ENCODE measurements at regions of chr3 and their contacts with region 1.

Region 1: GRCh38 chr3:134473868-134474546 is 11.8 kb downstream of the ANAPC13 start:
- DNase-seq: peak; percentile 66 to 92 (median 78)
- H3K4me3 ChIP-seq: no peak overlapping the region
- H3K27ac ChIP-seq: no peak overlapping the region
- H3K4me1 ChIP-seq: no peaks in the 10 kb centered on the region
- H3K27me3 ChIP-seq: no peaks in the 10 kb centered on the region
- CTCF ChIP-seq: peak; percentile 69 to 89 (median 82)
- POLR2A ChIP-seq: no peak

Region 2: DNA sequence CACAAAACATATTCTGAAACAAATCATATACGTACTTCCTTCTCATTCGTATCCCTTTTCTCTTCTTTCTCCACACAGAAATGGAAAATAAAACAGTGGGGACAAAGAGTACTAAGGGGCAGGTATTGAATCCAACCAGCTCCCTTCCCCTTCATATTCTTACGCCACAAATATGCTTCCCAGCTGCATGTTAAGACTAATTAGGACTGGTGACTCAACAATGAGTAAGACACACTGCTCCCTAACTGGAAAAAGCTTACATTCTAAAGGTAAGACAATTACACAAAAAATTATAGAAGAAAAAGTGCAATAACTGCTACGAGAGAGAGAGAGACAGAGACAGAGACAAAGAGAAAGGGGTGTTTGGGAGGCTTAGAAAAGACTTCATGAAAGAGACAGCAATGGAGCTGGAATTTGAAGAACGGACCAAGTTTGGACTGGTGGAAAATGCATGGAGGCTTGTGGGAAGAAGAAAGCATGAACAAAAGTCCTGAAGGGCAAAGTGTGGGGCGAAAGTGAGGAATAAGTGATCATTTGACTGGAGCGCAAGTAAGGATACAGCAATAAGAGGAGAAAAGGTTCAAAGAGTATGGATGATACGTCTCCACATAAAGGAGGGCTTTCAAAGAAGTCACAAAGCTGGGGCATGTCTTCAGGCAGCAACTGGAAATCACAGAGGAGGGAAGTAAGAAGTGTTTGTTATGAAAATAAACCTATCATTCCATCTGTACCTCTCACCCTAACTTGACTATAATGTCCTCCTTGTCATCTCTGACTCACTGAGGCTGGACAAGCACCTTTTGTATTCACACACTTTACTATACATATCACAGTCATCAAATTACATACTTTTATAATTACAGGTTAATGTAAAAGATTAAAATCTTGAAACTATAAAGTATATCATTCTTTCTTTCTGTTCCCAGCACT is 272.5 kb before region 1 on chr3:
- intact Hi-C with region 1: loop called in 1 of 2 experiments (anchors 10 kb)
- DNase-seq: no peak
- H3K4me3 ChIP-seq: no peak overlapping the region
- H3K27ac ChIP-seq: no peak overlapping the region
- H3K4me1 ChIP-seq: no peaks in the 10 kb centered on the region
- H3K27me3 ChIP-seq: no peaks in the 10 kb centered on the region
- CTCF ChIP-seq: no peak
- POLR2A ChIP-seq: no peak

Region 3: DNA sequence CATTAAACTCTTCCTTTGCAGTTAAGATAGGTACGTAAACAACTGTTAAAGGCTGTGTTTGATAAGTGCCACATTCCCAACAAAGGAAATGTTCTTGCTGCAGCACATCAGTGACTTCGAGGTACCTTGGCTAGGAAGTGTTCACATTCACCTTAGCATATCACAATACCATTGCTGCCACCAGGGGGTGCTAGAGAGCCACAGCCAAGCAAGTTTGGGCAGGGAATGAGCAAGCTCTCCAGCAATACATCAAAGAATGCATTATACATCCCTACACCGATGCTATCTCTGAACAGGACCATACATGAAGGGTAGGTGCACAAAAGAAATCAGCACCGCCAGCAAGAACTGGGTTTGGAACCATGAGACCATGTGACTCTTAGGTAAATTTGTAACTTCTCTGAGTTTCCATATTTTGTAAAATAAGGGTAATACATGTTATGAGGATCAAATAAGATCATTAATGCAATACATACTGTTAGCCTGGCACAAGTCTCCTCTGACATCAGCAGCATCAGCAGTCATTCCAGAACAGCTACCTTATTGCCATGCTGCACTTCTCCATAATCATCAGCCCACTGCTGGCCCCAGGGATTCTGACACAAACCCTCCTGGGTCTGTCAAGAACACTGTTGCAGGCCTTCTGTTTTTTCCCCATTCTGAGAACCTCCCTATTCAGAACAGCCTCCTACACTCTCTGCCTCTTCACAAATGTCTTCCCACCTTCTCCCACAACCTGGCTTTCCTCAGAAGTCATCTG is 260.9 kb before region 1 on chr3:
- intact Hi-C with region 1: loop called (anchors 10 kb)
- DNase-seq: peak; percentile 72 to 93 (median 85)
- H3K4me3 ChIP-seq: no peak overlapping the region
- H3K27ac ChIP-seq: no peak overlapping the region
- H3K4me1 ChIP-seq: peaks cover 0 to 11% of the 10 kb centered on the region in 2 donors
- H3K27me3 ChIP-seq: no peaks in the 10 kb centered on the region
- CTCF ChIP-seq: peak; percentile 92 to 99 (median 94)
- POLR2A ChIP-seq: no peak

Region 4: DNA sequence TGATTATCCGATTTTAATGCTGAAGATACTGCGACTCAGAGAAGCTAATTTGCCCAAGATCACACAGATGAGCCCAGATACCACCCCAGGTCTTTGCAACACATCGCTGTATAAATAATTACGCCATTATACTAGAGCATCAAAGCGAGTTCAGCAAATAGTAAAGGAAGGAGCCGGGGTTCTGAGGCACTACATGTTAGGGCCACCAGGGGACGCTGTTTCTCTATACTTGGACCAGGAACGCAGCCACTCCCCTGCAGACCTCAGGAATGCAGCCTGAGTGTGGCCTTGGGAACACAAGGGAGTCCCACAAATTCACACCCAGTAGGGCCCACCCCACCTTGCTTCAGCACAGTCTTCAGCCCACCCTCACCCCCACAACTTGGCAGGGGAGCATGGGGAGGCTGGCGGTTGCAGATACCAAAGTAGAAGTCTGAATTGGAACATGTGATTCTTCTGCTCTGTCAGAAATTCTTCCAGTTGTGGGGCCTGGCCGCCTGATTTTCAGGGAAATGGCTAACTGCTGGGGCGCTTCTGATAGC is 165.6 kb before region 1 on chr3:
- intact Hi-C with region 1: loop called (anchors 5 kb)
- DNase-seq: peak; percentile 69 to 94 (median 85)
- H3K4me3 ChIP-seq: no peak overlapping the region
- H3K27ac ChIP-seq: peak overlapping the region in 2 of 5 donors; percentile 48 to 83
- H3K4me1 ChIP-seq: peaks cover under 1 to 16% of the 10 kb centered on the region in 2 donors
- H3K27me3 ChIP-seq: no peaks in the 10 kb centered on the region
- CTCF ChIP-seq: peak; percentile 99 to 100 (median 100)
- POLR2A ChIP-seq: no peak

Region 5: GRCh38 chr3:134373994-134374790 is 99.8 kb before region 1 on chr3 and contains the start of gene AMOTL2:
- intact Hi-C with region 1: loop called in 1 of 2 experiments (anchors 10 kb)
- DNase-seq: peak; percentile 77 to 93 (median 91)
- H3K4me3 ChIP-seq: peak within 1 kb of the TSS; percentile 29 to 85 (median 66)
- H3K27ac ChIP-seq: peak within 1 kb of the TSS; percentile 63 to 98 (median 94)
- H3K4me1 ChIP-seq: peaks cover 33 to 40% of the 10 kb centered on the region in 2 donors
- H3K27me3 ChIP-seq: no peaks in the 10 kb centered on the region
- CTCF ChIP-seq: no peak
- POLR2A ChIP-seq: peak; percentile 96 to 98
- total RNA-seq, gene AMOTL2: 9.3 to 63.0 (median 32.4) TPM

Region 6: DNA sequence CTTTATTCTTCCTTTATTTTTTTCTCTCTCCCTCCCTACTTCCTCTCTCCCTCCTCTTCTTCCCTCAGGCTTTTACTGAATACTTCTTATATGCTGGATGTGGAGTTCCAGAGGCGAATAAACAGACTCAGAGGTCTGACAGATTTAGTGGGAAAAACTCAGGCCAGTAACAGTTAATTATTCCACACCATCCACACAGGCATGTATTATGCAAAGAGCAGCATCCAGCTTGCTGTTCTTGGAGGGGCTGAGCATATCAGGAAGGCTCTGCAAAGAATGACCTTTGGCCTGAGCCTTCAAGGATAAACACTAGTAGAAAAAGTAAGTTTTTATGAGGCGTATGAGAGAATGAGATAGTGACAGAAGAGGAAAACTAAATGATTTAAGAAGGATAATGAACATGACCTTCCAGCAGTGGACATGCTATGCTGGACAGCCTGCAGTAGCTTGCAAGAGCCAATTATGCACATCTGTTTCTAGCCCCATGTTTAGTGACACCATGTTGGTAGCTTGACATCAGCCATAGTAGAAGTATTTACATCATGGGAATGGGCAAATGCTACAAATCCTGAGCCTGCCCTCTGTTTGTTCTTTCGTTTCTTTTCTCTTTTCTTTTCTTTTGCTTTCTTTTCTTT is 708.5 kb after region 1 on chr3:
- intact Hi-C with region 1: no loop called
- DNase-seq: no peak
- H3K4me3 ChIP-seq: no peak overlapping the region
- H3K27ac ChIP-seq: no peak overlapping the region
- H3K4me1 ChIP-seq: no peaks in the 10 kb centered on the region
- H3K27me3 ChIP-seq: no peaks in the 10 kb centered on the region
- CTCF ChIP-seq: no peak
- POLR2A ChIP-seq: no peak